Prostate gland (tissue), 2 donors: ENCODE measurements at regions of chr15 and their contacts with region 1.

Region 1: DNA sequence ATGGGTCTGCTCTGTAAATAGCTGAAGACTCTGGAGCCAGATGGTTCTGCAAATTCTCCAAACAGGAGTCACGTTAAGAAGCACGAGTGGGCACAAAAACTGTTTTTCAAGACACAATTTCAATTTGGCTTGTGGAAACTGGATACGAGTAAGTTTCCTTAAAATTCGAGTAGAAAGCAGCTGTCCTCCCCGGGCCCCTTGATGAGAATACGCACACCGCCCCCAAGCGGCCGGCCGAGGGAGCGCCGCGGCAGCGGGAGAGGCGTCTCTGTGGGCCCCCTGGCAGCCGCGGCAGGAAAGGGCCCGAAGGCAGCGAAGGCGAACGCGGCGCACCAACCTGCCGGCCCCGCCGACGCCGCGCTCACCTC is 778 bp upstream of the THBS1 start:
- DNase-seq: peak; percentile 95
- H3K4me3 ChIP-seq: peak overlapping the region; percentile 50 to 54
- H3K27ac ChIP-seq: peak overlapping the region; percentile 84 to 88
- H3K4me1 ChIP-seq: peaks cover 5% of the 10 kb centered on the region
- H3K27me3 ChIP-seq: no peaks in the 10 kb centered on the region
- CTCF ChIP-seq: peak; percentile 98 to 99 (median 98)
- POLR2A ChIP-seq: peak; percentile 33

Region 2: DNA sequence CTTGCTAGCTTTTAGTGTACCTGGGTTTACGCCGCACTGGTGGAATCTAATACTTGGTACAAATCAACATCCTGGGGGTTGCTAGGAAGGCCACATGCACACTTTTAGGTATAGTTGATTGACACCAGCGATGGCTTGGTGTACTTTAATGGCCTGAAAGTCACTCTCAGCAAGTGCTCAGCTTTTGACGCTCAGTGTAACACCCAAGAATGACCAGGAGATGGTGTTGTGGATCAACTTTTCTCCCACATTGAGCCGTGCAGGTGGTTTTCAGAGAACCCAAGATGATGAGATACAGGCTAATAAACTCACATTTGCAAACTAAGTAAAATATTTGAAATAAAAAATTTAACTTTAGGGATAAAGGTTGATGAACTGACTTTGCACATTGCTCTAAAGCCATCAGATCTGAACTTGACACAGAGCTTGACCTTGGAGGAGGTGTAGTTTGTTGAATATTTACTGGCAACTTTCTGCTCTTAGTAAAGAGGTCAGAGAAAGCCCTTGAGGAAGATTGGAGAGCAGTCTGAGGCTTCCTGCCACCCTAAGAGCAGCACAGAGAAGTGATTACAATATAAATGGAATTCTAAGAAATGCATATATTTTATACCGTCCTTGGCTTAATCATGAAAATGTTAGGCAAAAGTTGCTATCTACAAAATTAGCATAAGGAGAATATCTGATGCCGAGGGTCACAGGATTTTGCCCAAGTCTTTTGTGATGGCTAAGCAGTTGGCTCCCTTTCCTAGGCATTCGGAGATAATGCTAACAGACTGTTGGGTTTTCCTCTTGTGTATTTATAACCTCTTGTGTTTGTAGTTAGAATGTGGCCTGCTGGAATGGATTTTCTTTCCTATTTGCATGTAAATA is 872.1 kb before region 1 on chr15:
- intact Hi-C with region 1: loop called (anchors 5 kb)
- DNase-seq: peak; percentile 36
- H3K4me3 ChIP-seq: no peak overlapping the region
- H3K27ac ChIP-seq: no peak overlapping the region
- H3K4me1 ChIP-seq: no peaks in the 10 kb centered on the region
- H3K27me3 ChIP-seq: no peaks in the 10 kb centered on the region
- CTCF ChIP-seq: peak in 3 of 4 experiments; percentile 54 to 82 (median 75)
- POLR2A ChIP-seq: no peak

Region 3: GRCh38 chr15:38879909-38880471 is 700.1 kb before region 1 on chr15:
- intact Hi-C with region 1: loop called (anchors 10 kb)
- DNase-seq: no peak
- H3K4me3 ChIP-seq: no peak overlapping the region
- H3K27ac ChIP-seq: no peak overlapping the region
- H3K4me1 ChIP-seq: peaks cover 8% of the 10 kb centered on the region
- H3K27me3 ChIP-seq: no peaks in the 10 kb centered on the region
- CTCF ChIP-seq: no peak
- POLR2A ChIP-seq: no peak

Region 4: DNA sequence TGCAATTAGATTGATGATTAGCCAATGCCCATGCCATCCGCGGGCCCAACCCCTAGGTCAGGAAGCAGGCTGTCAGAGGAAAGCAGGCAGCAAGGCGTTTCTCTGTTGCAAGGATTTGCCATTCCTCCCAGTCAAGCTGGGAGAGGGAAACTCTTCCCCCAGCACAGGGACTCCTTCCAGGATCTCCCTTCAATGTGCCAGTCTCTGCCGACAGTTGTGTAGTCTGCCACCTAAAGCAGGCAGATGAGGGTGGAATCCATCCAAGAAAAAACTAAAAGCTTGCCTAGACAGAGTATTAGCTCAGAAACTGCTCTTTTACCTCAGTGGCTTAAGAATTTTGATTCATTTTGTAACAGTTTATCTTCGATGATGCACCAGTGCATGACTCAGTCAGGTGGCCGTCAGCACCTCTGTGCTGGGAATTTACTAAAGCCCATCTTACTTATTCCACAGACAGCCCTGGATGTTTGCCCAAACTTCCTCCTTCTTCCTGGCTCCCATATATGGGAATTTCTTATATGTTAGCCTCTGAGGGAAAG is 500.7 kb before region 1 on chr15:
- intact Hi-C with region 1: loop called (anchors 5 kb)
- DNase-seq: no peak
- H3K4me3 ChIP-seq: no peak overlapping the region
- H3K27ac ChIP-seq: no peak overlapping the region
- H3K4me1 ChIP-seq: no peaks in the 10 kb centered on the region
- H3K27me3 ChIP-seq: no peaks in the 10 kb centered on the region
- CTCF ChIP-seq: no peak
- POLR2A ChIP-seq: no peak

Region 5: GRCh38 chr15:39358441-39359041 is 221.6 kb before region 1 on chr15:
- intact Hi-C with region 1: loop called (anchors 10 kb)
- DNase-seq: no peak
- H3K4me3 ChIP-seq: no peak overlapping the region
- H3K27ac ChIP-seq: peak overlapping the region; percentile 1 to 38
- H3K4me1 ChIP-seq: peaks cover 11% of the 10 kb centered on the region
- H3K27me3 ChIP-seq: no peaks in the 10 kb centered on the region
- CTCF ChIP-seq: no peak
- POLR2A ChIP-seq: no peak

Region 6: DNA sequence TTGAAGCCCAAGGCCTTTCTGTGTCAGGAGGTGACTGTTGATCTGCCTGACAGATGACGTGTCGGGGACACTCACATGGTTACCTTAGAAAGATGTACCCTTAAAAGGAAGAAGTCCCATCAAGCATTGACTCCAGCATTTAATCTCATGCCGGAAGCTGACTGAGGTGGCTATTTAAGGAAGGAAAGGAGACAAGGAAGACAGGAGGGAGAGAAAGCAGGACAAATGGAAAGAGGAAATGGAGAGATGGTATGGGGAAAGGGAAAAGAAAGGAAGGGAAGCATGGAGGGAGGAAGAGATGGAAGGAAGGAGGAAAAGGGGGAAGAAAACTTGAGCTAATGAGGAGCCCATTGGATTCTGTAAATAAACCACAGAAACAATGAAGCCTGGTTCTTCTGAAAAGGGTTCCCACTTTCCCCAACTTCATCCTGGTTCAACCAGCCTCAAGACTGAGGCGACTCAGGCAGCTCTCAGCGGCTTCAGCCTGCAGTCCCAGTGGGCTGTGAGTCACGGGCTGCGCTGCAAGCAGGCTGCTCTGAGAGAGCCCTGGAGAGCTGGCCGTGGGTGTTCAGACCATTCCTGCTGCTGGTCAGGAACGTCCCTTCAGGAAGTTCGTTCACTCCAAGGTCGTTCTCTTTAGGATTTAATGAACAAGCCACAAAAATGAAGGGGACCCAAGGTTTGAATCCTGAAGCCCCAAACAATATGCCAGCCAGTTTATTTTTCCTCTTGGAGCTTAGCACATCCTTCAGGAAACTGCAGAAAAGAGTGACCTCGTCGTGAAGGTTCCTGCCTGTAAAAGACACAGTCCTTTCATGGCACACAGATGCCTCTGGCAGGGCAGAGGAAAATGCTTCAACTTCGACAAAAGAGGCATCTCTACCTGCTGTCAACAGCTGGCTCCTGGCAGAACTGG is 68.8 kb before region 1 on chr15:
- intact Hi-C with region 1: no loop called
- DNase-seq: no peak
- H3K4me3 ChIP-seq: no peak overlapping the region
- H3K27ac ChIP-seq: no peak overlapping the region
- H3K4me1 ChIP-seq: no peaks in the 10 kb centered on the region
- H3K27me3 ChIP-seq: no peaks in the 10 kb centered on the region
- CTCF ChIP-seq: no peak
- POLR2A ChIP-seq: no peak

Region 7: GRCh38 chr15:39756806-39757522 is 176.9 kb after region 1 on chr15:
- intact Hi-C with region 1: loop called (anchors 2 kb)
- DNase-seq: peak; percentile 31
- H3K4me3 ChIP-seq: no peak overlapping the region
- H3K27ac ChIP-seq: no peak overlapping the region
- H3K4me1 ChIP-seq: no peaks in the 10 kb centered on the region
- H3K27me3 ChIP-seq: no peaks in the 10 kb centered on the region
- CTCF ChIP-seq: peak; percentile 68 to 84 (median 76)
- POLR2A ChIP-seq: no peak

Region 8: GRCh38 chr15:40038638-40039543 is 458.8 kb after region 1 on chr15 and contains the start of gene SRP14:
- intact Hi-C with region 1: no loop called
- DNase-seq: peak; percentile 93
- H3K4me3 ChIP-seq: peak within 1 kb of the TSS; percentile 87
- H3K27ac ChIP-seq: peak within 1 kb of the TSS; percentile 98 to 99
- H3K4me1 ChIP-seq: peaks cover 5% of the 10 kb centered on the region
- H3K27me3 ChIP-seq: no peaks in the 10 kb centered on the region
- CTCF ChIP-seq: peak in 2 of 4 experiments; percentile 68
- POLR2A ChIP-seq: peak; percentile 83
- total RNA-seq, gene SRP14: 366 to 428 TPM